Posterior vena cava (tissue), 2 donors: ENCODE measurements at regions of chr10 and their contacts with region 1.

Region 1: DNA sequence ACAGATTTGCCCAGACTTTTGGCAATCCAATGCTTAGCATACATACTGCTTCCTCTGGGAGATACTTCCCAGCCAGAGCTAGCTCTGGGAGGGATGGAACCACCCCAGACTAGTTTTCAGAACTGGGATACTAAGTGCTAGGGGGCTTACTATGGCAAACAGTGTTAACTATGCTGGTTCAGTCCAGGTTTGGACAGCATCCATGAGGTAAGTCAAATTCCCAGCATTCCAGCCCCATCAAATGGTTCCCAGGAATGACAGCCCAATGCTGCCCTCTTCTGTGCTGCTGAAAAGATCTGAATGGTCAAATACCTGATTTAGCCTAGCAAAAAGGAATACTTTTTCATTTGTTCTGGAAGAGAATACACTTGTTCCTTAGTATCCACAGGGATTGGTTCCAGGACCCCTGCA is 141.7 kb upstream of the CCDC6 start:
- DNase-seq: no peak

Region 2: DNA sequence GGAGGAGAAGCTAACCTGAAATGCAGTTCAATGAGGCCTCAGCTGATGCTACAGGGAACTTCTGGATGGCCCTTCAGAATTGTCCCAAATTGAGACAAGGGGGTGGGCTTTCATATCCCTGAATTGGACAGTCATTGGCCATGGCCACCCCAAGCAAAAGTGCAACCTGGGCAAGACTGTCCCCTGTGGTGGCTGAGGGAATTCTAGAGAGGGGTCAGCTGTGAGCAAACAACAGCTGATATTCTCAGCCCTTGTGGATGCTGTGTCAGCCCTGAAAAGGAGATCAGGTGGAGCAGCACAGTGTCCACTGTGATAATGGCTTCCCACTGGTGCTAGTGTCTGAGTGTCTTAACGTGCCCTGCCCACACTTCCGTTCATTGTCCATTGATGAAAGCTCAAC is 415.0 kb before region 1 on chr10:
- intact Hi-C with region 1: loop called in 1 of 2 experiments (anchors 10 kb)
- DNase-seq: no peak

Region 3: GRCh38 chr10:61628875-61629513 is 1580.9 kb after region 1 on chr10:
- intact Hi-C with region 1: loop called in 1 of 2 experiments (anchors 5 kb)
- DNase-seq: no peak